ENCODE measurements at regions of chr2 and their contacts with region 1.

Region 1: DNA sequence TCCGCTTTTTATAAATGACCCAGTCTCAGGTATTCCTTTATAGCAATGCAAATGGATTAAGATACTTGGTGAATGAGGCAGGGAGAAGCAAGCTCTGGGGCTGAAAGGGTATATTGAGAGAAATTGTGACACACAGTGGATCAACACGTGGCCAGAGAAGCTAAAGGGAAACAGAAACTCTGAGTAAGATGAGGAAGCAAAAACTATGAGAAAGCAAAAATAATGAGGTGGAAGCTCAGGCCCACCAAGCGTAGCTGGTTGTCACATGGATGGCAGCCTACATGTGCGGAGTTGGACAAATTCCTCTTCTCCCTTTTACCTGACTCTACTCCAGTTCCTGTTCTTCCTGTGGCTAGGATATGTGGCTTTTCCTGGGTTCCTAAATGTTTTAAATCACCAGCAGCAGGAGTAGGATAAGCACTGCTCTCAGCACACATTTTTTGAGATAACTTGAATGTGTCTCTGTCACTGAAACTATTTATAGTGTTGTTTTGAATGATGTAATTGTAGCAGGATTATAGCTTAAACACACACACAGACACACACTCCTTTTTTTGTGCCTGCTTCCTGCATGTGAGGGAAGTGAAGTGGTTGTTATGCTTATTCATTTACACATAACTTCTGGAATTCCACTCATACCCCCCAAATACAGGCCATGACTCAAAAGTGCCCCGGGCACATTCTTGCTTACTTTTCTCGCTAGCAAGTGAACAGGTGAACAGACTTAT is 30.1 kb upstream of the EPC2 start:
- DNase-seq: peak; percentile 80 to 88
- H3K4me3 ChIP-seq: no peak overlapping the region
- H3K4me3 Mint-ChIP-seq: peak overlapping the region; percentile 17
- H3K27ac Mint-ChIP-seq: peak overlapping the region; percentile 84
- H3K4me1 ChIP-seq: peaks cover 29% of the 10 kb centered on the region
- H3K4me1 Mint-ChIP-seq: peaks cover 30% of the 10 kb centered on the region
- H3K27me3 ChIP-seq: no peaks in the 10 kb centered on the region
- H3K27me3 Mint-ChIP-seq: no peaks in the 10 kb centered on the region
- CTCF ChIP-seq: no peak

Region 2: DNA sequence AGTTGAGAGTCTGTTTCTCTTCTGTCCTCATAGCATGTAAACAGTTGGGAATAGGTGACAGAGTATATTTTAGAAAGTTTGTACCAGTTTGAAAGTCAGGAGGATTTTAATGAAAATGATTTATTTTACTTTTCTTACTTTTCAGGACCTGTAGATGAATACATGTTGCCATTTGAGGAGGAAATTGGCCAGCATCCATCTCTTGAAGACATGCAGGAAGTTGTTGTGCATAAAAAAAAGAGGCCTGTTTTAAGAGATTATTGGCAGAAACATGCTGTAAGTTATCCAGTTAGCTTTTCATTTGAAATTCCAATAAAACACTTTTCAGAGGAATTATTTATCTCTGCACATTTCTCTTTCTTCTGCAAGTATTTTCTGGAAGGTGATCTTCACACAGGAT is 688.6 kb before region 1 on chr2:
- CTCF ChIA-PET with region 1: no interaction called
- POLR2A ChIA-PET with region 1: no interaction called
- intact Hi-C with region 1: loop called (anchors 1 kb)
- DNase-seq: no peak
- H3K4me3 ChIP-seq: no peak overlapping the region
- H3K4me3 Mint-ChIP-seq: peak overlapping the region; percentile 8
- H3K27ac Mint-ChIP-seq: peak overlapping the region; percentile 82
- H3K4me1 ChIP-seq: peaks cover 37% of the 10 kb centered on the region
- H3K4me1 Mint-ChIP-seq: peaks cover 16% of the 10 kb centered on the region
- H3K27me3 ChIP-seq: no peaks in the 10 kb centered on the region
- H3K27me3 Mint-ChIP-seq: no peaks in the 10 kb centered on the region
- CTCF ChIP-seq: no peak

Region 3: GRCh38 chr2:148020111-148021058 is 594.1 kb before region 1 on chr2 and contains the start of gene ORC4:
- CTCF ChIA-PET with region 1: no interaction called
- POLR2A ChIA-PET with region 1: no interaction called
- intact Hi-C with region 1: loop called (anchors 1 kb)
- DNase-seq: peak; percentile 98 to 100
- H3K4me3 ChIP-seq: peak within 1 kb of the TSS; percentile 84
- H3K4me3 Mint-ChIP-seq: peak within 1 kb of the TSS; percentile 89
- H3K27ac Mint-ChIP-seq: peak within 1 kb of the TSS; percentile 85
- H3K4me1 ChIP-seq: peaks cover 6% of the 10 kb centered on the region; the same call in 1 of the 2 replicates
- H3K4me1 Mint-ChIP-seq: peaks cover 15% of the 10 kb centered on the region
- H3K27me3 ChIP-seq: no peaks in the 10 kb centered on the region
- H3K27me3 Mint-ChIP-seq: no peaks in the 10 kb centered on the region
- CTCF ChIP-seq: peak; percentile 38 to 73
- total RNA-seq, gene ORC4: 56.3 and 59.9 TPM in 2 replicates

Region 4: DNA sequence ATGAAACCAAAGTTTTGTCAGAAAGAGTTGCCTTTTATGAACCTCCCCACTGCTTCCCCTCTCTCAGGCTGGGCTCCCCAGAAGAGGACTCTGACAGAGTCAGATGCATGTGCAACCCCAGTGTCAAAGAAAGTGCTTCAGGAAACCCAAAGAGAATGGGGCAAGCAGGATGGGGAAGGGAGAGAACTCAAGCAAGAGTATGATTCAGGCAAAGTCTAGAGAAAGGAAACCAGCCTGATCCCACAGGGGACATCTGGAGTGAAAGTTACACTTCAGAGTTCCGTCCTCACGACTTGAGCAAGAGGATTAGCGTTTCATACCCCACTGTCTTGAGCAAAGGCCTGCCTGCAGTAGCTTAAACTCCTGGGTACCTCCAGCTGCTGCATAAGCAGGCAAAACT is 21.7 kb before region 1 on chr2:
- CTCF ChIA-PET with region 1: no interaction called
- POLR2A ChIA-PET with region 1: no interaction called
- intact Hi-C with region 1: loop called (anchors 2 kb)
- DNase-seq: no peak
- H3K4me3 ChIP-seq: no peak overlapping the region
- H3K4me3 Mint-ChIP-seq: no peak overlapping the region
- H3K27ac Mint-ChIP-seq: no peak overlapping the region
- H3K4me1 ChIP-seq: no peaks in the 10 kb centered on the region
- H3K4me1 Mint-ChIP-seq: no peaks in the 10 kb centered on the region
- H3K27me3 ChIP-seq: no peaks in the 10 kb centered on the region
- H3K27me3 Mint-ChIP-seq: peaks cover 7% of the 10 kb centered on the region
- CTCF ChIP-seq: no peak

Region 5: DNA sequence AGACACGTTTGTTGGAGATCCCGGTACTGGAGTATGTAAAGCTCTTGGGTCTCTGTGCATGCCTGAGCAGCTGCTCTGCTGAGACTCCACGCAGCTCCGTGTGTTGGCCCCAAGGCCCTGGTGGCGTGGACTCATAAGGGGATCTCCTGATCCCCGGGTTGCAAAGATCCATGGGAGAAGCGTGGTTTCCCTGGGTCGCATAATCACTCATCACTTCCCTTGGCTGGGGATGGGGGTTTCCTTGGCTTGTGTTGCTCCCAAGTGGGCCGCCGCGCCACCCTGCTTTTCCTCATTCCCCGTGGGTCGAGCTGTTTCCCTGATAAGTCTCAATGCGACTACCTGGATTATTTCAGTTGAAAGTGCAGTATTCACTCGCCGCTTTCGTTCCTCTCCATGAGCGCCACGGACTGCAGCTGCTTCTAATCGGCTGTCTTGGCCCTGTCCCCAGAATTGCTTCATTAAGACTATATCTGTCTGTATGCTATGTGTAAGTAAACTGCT is 106.1 kb after region 1 on chr2:
- CTCF ChIA-PET with region 1: no interaction called
- POLR2A ChIA-PET with region 1: no interaction called
- intact Hi-C with region 1: no loop called
- DNase-seq: no peak
- H3K4me3 ChIP-seq: no peak overlapping the region
- H3K4me3 Mint-ChIP-seq: no peak overlapping the region
- H3K27ac Mint-ChIP-seq: peak overlapping the region; percentile 61
- H3K4me1 ChIP-seq: peaks cover 42% of the 10 kb centered on the region
- H3K4me1 Mint-ChIP-seq: peaks cover 54% of the 10 kb centered on the region
- H3K27me3 ChIP-seq: no peaks in the 10 kb centered on the region
- H3K27me3 Mint-ChIP-seq: no peaks in the 10 kb centered on the region
- CTCF ChIP-seq: no peak

Measured in Caco-2 (cell line).